Activated naive CD8-positive, alpha-beta T cell treated with anti-CD3 and anti-CD28 coated beads, Interleukin-2, amount 10 ng/mL, durations not matched to agents 7 days and 5 days (primary cell): ENCODE measurements at regions of chr15 and their contacts with region 1.

Region 1: GRCh38 chr15:69452692-69453521 is at the start of gene RPLP1:
- DNase-seq: peak; percentile 97
- ATAC-seq: peak; percentile 89
- H3K4me3 Mint-ChIP-seq: peak within 1 kb of the TSS; percentile 100
- H3K27ac Mint-ChIP-seq: peak within 1 kb of the TSS; percentile 100
- H3K4me1 Mint-ChIP-seq: peaks cover 31% of the 10 kb centered on the region
- H3K27me3 Mint-ChIP-seq: no peaks in the 10 kb centered on the region
- total RNA-seq, gene RPLP1: 1,785 to 1,910 TPM

Region 2: DNA sequence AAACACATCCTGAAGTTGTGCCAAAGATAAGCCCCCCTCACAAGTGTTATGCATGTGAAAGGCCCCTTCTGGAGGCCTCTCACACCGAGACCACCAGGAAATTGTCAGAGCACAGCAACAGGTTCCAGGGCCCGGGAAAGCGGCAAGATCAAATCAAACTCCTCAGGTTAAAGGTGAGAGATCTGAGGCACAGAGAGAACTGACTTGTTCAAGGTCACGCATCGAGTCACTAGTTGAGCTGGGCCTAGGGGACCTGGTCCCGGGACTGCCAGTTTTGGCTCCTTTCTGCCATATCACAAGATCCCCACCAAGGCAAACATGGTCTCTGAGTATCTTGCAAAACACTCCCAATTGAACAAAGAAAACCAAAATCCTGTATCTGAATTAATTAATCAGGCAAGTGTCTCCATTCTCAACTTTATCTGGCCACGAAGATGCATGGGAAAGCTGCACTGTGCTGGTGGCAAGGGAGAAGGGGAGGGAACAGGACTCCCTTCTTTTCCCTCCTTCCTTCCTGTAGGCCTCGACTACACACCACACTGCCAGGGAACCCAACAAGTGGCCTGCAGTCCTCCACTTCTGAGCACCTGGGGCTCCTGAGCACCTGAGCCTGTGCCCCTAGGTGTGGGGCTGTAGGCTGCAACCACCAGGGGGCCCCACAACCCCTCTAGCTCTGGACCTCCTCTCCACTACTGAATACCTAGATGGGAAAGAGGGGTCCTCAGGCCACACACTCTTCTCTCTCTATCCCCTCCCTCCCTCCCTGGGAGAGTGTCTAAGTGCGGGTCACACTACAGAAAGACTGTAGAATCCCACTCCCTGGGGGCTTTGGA is 669.5 kb before region 1 on chr15:
- POLR2A ChIA-PET with region 1: no interaction called
- DNase-seq: peak; percentile 75
- ATAC-seq: peak; percentile 82
- H3K4me3 Mint-ChIP-seq: peak overlapping the region; percentile 7
- H3K27ac Mint-ChIP-seq: peak overlapping the region; percentile 87
- H3K4me1 Mint-ChIP-seq: peaks cover 36% of the 10 kb centered on the region
- H3K27me3 Mint-ChIP-seq: no peaks in the 10 kb centered on the region

Region 3: GRCh38 chr15:69413822-69414700 is 38.8 kb before region 1 on chr15 and contains the start of gene KIF23:
- POLR2A ChIA-PET with region 1: interaction called, 52 read pairs
- DNase-seq: peak; percentile 92
- ATAC-seq: peak; percentile 96
- H3K4me3 Mint-ChIP-seq: peak within 1 kb of the TSS; percentile 92
- H3K27ac Mint-ChIP-seq: peak within 1 kb of the TSS; percentile 85
- H3K4me1 Mint-ChIP-seq: peaks cover 30% of the 10 kb centered on the region
- H3K27me3 Mint-ChIP-seq: peaks cover 4% of the 10 kb centered on the region
- total RNA-seq, gene KIF23: 50.7 to 57.7 TPM

Region 4: DNA sequence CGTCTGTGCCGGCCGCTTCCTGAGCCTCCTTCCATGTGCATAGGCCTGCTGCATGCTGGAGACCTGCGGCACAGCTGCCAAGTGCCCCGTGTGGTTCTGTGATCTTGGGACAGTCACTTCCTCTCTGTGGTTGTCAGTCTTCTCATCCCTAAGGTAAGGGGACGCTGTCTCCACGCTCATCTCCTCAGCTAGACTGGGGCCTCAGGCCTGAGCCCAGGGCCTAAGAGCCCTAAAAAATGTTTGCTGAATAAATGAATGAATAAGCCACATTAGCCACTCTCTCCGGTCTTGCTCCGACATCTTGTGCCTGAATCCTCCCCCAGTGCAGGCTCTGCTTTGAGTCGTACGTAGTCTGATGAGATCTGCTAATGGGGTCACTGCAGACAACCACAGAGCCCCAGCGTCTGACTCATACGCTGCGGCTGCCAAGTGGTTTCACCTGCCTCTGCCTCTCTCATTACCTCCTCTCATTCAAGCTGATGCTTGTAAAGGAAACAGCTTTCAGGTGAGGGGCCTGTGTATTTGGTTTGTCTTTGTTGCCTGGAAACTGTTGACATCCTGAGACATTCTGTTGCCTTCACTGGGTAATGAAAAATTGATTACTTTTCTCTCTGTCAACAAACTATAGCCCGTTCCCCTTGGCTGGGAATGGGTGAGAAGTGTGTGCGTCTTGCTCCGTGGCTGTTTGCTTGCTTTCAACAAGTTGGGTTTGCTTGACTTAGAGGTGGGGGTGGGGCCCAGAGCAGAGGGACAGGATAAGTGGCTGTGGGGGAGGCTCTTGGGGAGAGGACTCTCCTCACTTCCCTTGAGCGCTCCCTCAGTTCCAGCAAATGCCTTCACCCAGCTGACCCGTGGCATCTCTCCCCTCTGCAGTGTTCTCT is 15.6 kb after region 1 on chr15:
- POLR2A ChIA-PET with region 1: interaction called, 134 read pairs
- DNase-seq: peak; percentile 81
- ATAC-seq: peak; percentile 98
- H3K4me3 Mint-ChIP-seq: peak overlapping the region; percentile 72
- H3K27ac Mint-ChIP-seq: peak overlapping the region; percentile 79
- H3K4me1 Mint-ChIP-seq: peaks cover 29% of the 10 kb centered on the region
- H3K27me3 Mint-ChIP-seq: peaks cover 23% of the 10 kb centered on the region